Activated CD8-positive, alpha-beta T cell treated with anti-CD3 and anti-CD28 coated beads, Interleukin-2, amount 10 ng/mL, durations not matched to agents 7 days and 5 days (primary cell): ENCODE measurements at regions of chr20 and their contacts with region 1.

Region 1: DNA sequence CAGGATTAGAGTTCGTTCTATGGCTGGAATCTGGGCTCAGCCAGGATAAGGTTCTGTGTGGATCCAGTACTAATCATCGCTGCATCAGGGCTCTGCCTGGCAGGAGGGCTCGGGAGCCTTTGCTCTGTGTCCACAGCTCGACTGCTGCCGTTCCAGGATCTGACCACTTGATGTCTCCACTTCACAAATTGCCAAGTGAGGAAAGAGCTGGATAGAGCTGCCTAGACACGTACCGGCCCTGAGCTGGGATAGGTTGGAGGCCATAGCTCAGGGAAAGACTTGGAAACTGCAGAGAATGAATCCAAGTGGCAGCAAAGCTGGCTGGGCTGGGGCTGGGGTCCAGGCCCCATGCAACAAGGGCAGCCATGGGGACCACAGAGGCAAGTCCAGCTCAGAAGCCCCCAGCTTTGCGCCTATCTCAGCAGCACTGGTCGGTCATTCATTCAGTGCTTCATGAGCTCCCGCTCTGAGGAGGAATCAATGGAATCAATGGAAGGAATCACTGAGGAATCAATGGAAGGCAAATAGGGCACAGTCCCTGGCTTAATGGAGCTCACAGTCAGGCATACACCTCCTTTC is 38.0 kb upstream of the TOP1 start:
- DNase-seq: peak; percentile 85
- ATAC-seq: peak; percentile 90
- H3K4me3 Mint-ChIP-seq: peak overlapping the region; percentile 15
- H3K27ac Mint-ChIP-seq: peak overlapping the region; percentile 85
- H3K4me1 Mint-ChIP-seq: peaks cover 55% of the 10 kb centered on the region
- H3K27me3 Mint-ChIP-seq: no peaks in the 10 kb centered on the region

Region 2: GRCh38 chr20:40778894-40779496 is 211.6 kb before region 1 on chr20:
- CTCF ChIA-PET with region 1: no interaction called
- POLR2A ChIA-PET with region 1: no interaction called
- DNase-seq: no peak
- ATAC-seq: no peak
- H3K4me3 Mint-ChIP-seq: no peak overlapping the region
- H3K27ac Mint-ChIP-seq: no peak overlapping the region
- H3K4me1 Mint-ChIP-seq: no peaks in the 10 kb centered on the region
- H3K27me3 Mint-ChIP-seq: peaks cover 20% of the 10 kb centered on the region

Region 3: GRCh38 chr20:40925829-40926510 is 64.7 kb before region 1 on chr20:
- CTCF ChIA-PET with region 1: no interaction called
- POLR2A ChIA-PET with region 1: no interaction called
- DNase-seq: no peak
- ATAC-seq: no peak
- H3K4me3 Mint-ChIP-seq: no peak overlapping the region
- H3K27ac Mint-ChIP-seq: no peak overlapping the region
- H3K4me1 Mint-ChIP-seq: no peaks in the 10 kb centered on the region
- H3K27me3 Mint-ChIP-seq: peaks cover 17% of the 10 kb centered on the region

Region 4: GRCh38 chr20:40980106-40980827 is 10.4 kb before region 1 on chr20:
- CTCF ChIA-PET with region 1: interaction called, 26 read pairs
- POLR2A ChIA-PET with region 1: interaction called, 3 read pairs
- DNase-seq: peak; percentile 17
- ATAC-seq: no peak
- H3K4me3 Mint-ChIP-seq: no peak overlapping the region
- H3K27ac Mint-ChIP-seq: no peak overlapping the region
- H3K4me1 Mint-ChIP-seq: peaks cover 5% of the 10 kb centered on the region
- H3K27me3 Mint-ChIP-seq: peaks cover 18% of the 10 kb centered on the region

Region 5: GRCh38 chr20:41017390-41018042 is 26.9 kb after region 1 on chr20:
- CTCF ChIA-PET with region 1: interaction called, 47 read pairs
- POLR2A ChIA-PET with region 1: interaction called, 9 read pairs
- DNase-seq: no peak
- ATAC-seq: no peak
- H3K4me3 Mint-ChIP-seq: no peak overlapping the region
- H3K27ac Mint-ChIP-seq: no peak overlapping the region
- H3K4me1 Mint-ChIP-seq: peaks cover 6% of the 10 kb centered on the region
- H3K27me3 Mint-ChIP-seq: peaks cover 6% of the 10 kb centered on the region

Region 6: GRCh38 chr20:41038878-41039404 is 48.3 kb after region 1 on chr20:
- CTCF ChIA-PET with region 1: interaction called, 141 read pairs
- POLR2A ChIA-PET with region 1: no interaction called
- DNase-seq: no peak
- ATAC-seq: no peak
- H3K4me3 Mint-ChIP-seq: no peak overlapping the region
- H3K27ac Mint-ChIP-seq: peak overlapping the region; percentile 41
- H3K4me1 Mint-ChIP-seq: peaks cover 89% of the 10 kb centered on the region
- H3K27me3 Mint-ChIP-seq: no peaks in the 10 kb centered on the region

Region 7: DNA sequence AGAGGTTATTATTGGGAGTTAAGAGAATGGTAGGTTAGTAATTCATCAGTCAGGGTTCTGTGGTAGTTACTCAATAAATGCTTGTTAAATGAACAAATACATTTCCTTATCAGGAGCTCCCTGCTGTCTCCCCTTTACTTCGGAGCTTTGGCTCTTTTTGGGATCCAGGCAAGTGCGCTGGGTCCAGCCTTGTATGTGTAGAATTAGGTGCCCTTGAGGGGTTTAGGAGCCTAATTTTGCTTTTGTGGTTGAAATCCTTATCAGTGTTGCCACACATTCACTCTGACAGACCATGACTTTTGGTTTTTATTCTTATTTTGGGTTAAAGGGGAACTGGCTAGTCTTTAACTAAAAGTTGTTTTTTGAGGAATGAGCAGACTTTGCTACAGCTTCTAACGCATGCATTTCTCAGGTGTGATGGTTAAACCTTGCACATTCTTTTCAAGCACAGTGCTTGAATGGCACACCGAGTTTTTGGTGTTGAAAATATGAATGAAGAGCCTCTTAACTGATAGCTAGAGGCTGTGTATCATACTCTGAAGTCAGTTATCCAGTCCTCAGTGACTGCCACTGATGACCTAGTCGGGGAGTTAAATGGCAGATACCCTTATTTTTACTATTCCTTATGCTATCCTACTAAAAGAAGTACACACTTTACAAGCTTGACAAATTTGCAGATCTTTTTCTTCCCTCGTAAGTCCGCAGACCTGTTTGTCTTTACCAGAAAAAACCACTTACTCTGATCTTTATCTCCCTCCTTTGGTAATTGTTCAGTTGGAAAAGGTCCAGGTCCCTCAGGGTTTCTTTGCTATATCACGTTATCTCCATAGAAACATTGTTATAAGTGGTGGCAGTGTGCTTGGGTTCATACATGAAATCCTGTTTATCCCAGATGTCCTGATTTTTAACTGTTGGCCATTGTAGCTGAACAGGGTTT is 96.0 kb after region 1 on chr20:
- CTCF ChIA-PET with region 1: interaction called, 225 read pairs
- POLR2A ChIA-PET with region 1: interaction called, 3 read pairs
- DNase-seq: no peak
- ATAC-seq: no peak
- H3K4me3 Mint-ChIP-seq: no peak overlapping the region
- H3K27ac Mint-ChIP-seq: peak overlapping the region; percentile 32
- H3K4me1 Mint-ChIP-seq: peaks cover 25% of the 10 kb centered on the region
- H3K27me3 Mint-ChIP-seq: no peaks in the 10 kb centered on the region

Region 8: GRCh38 chr20:41161886-41162285 is 171.3 kb after region 1 on chr20:
- CTCF ChIA-PET with region 1: interaction called, 10 read pairs
- POLR2A ChIA-PET with region 1: interaction called, 4 read pairs
- DNase-seq: no peak
- ATAC-seq: no peak
- H3K4me3 Mint-ChIP-seq: no peak overlapping the region
- H3K27ac Mint-ChIP-seq: peak overlapping the region; percentile 71
- H3K4me1 Mint-ChIP-seq: peaks cover 92% of the 10 kb centered on the region
- H3K27me3 Mint-ChIP-seq: no peaks in the 10 kb centered on the region